ENCODE measurements at regions of chr6 and their contacts with region 1.

Region 1: GRCh38 chr6:593139-593906 is 63.6 kb downstream of the HUS1B start:
- DNase-seq: peak; percentile 31 to 76 (median 66)
- ATAC-seq: peak; percentile 61
- H3K4me3 ChIP-seq: no peak overlapping the region
- H3K4me3 Mint-ChIP-seq: no peak overlapping the region
- H3K27ac ChIP-seq: no peak overlapping the region
- H3K27ac Mint-ChIP-seq: peak overlapping the region; percentile 6
- H3K4me1 ChIP-seq: no peaks in the 10 kb centered on the region
- H3K4me1 Mint-ChIP-seq: no peaks in the 10 kb centered on the region
- H3K27me3 ChIP-seq: no peaks in the 10 kb centered on the region
- H3K27me3 Mint-ChIP-seq: no peaks in the 10 kb centered on the region
- CTCF ChIP-seq: peak; percentile 78

Region 2: GRCh38 chr6:291697-292505 is 301.4 kb before region 1 on chr6 and contains the start of gene DUSP22:
- CTCF ChIA-PET with region 1: interaction called, 4 read pairs
- POLR2A ChIA-PET with region 1: no interaction called
- intact Hi-C with region 1: loop called in 1 of 2 experiments (anchors 2 kb)
- DNase-seq: peak; percentile 50 to 95 (median 81)
- ATAC-seq: peak; percentile 55
- H3K4me3 ChIP-seq: peak within 1 kb of the TSS; percentile 64 to 65
- H3K4me3 Mint-ChIP-seq: peak within 1 kb of the TSS; percentile 95
- H3K27ac ChIP-seq: peak within 1 kb of the TSS; percentile 55 to 85
- H3K27ac Mint-ChIP-seq: peak within 1 kb of the TSS; percentile 98
- H3K4me1 ChIP-seq: peaks cover 26% of the 10 kb centered on the region
- H3K4me1 Mint-ChIP-seq: peaks cover 51% of the 10 kb centered on the region
- H3K27me3 ChIP-seq: no peaks in the 10 kb centered on the region
- H3K27me3 Mint-ChIP-seq: no peaks in the 10 kb centered on the region
- CTCF ChIP-seq: no peak
- total RNA-seq, gene DUSP22: 19.9 to 22.1 TPM

Region 3: DNA sequence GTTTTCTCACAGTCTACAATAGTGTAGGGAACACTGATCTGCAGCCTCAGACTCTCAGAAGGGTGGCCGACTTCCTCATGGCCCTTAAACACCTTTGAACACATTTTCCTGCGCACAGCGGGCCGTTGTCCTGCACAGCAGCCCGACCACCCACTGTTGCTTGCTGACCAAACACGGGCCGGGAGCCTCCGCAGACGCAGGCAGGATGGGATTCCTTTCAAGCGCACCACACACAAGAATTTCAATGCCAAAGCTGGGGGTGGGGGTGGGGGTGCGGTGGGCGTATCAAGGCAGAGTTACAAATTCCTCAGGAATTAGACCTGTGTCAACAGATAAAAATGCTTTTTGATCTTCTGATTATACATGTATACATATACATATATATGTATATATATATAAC is 11.0 kb before region 1 on chr6:
- CTCF ChIA-PET with region 1: interaction called, 13 read pairs
- POLR2A ChIA-PET with region 1: no interaction called
- intact Hi-C with region 1: no loop called
- DNase-seq: no peak
- ATAC-seq: no peak
- H3K4me3 ChIP-seq: no peak overlapping the region
- H3K4me3 Mint-ChIP-seq: no peak overlapping the region
- H3K27ac ChIP-seq: no peak overlapping the region
- H3K27ac Mint-ChIP-seq: no peak overlapping the region
- H3K4me1 ChIP-seq: peaks cover 3% of the 10 kb centered on the region
- H3K4me1 Mint-ChIP-seq: peaks cover 25% of the 10 kb centered on the region
- H3K27me3 ChIP-seq: no peaks in the 10 kb centered on the region
- H3K27me3 Mint-ChIP-seq: no peaks in the 10 kb centered on the region
- CTCF ChIP-seq: no peak

Region 4: GRCh38 chr6:722077-722524 is 128.8 kb after region 1 on chr6:
- CTCF ChIA-PET with region 1: interaction called, 13 read pairs
- POLR2A ChIA-PET with region 1: no interaction called
- intact Hi-C with region 1: loop called (anchors 1 to 5 kb)
- DNase-seq: peak; percentile 36 to 79 (median 71)
- ATAC-seq: peak; percentile 81
- H3K4me3 ChIP-seq: no peak overlapping the region
- H3K4me3 Mint-ChIP-seq: peak overlapping the region; percentile 16
- H3K27ac ChIP-seq: no peak overlapping the region
- H3K27ac Mint-ChIP-seq: no peak overlapping the region
- H3K4me1 ChIP-seq: no peaks in the 10 kb centered on the region
- H3K4me1 Mint-ChIP-seq: peaks cover 3% of the 10 kb centered on the region
- H3K27me3 ChIP-seq: no peaks in the 10 kb centered on the region
- H3K27me3 Mint-ChIP-seq: peaks cover 6% of the 10 kb centered on the region
- CTCF ChIP-seq: peak; percentile 86

Region 5: DNA sequence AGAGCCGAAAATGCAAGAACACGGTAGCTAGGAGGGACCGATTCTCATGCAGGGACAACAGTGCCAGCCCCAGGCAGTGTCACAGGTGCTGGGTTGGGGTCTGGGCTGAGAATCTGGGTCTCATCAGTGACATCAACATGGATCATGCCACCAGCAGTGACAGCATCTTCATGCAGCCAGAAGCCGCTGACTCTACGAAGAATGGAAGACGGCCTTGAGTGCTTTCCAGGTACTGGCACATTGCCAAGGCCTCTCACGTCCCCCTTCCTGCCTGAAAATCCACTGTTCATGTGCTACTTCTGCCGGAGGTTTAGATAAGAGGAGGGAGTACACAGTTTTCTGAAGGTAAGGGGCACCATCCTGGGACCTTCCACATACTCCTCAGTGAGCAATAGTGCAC is 577.5 kb after region 1 on chr6:
- CTCF ChIA-PET with region 1: no interaction called
- POLR2A ChIA-PET with region 1: no interaction called
- intact Hi-C with region 1: no loop called
- DNase-seq: no peak
- ATAC-seq: no peak
- H3K4me3 ChIP-seq: no peak overlapping the region
- H3K4me3 Mint-ChIP-seq: no peak overlapping the region
- H3K27ac ChIP-seq: no peak overlapping the region
- H3K27ac Mint-ChIP-seq: no peak overlapping the region
- H3K4me1 ChIP-seq: no peaks in the 10 kb centered on the region
- H3K4me1 Mint-ChIP-seq: no peaks in the 10 kb centered on the region
- H3K27me3 ChIP-seq: no peaks in the 10 kb centered on the region
- H3K27me3 Mint-ChIP-seq: peaks cover 5% of the 10 kb centered on the region
- CTCF ChIP-seq: no peak

Region 6: DNA sequence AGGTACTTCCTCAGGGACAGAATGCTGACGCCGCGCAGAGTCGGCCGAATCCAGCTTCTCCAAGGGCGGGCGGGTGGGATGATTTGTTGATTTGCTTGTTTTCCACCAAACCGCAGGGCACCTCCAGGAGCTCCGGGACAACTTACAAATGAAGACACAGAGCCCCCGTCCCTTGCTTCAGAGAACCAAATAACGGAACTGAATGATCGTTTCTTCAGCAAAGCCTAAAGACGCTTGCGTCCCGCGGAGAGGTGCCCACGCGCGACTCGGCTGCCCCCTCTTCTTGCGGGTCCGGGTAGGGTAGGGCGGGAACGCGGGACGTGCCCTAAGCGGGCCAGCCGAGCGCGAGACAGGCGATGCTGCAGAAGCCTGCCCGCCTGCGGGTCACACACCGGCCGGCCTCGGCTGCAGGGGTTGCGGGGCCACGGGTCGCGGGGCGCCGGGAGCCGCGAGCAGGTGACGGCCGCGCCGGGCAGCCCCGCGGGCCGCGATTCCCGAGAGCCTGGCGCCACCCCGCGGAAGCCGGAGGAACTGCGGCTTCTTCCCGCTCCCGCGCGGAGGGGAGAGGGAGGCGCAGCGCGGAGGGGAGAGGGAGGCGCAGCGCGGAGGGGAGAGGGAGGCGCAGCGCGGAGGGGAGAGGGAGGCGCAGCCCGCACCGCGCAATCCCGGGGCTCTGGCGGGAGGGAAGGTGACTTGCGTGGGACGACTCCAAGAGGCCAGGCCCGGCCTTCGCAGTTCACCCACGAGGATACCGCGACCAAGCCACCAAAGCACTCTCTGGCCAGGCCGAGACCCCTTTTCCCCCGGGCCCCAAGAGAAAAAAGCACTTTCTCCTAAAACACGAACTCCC is 788.4 kb after region 1 on chr6:
- CTCF ChIA-PET with region 1: interaction called, 16 read pairs
- POLR2A ChIA-PET with region 1: no interaction called
- intact Hi-C with region 1: loop called in 1 of 2 experiments (anchors 5 kb)
- DNase-seq: peak in 7 of 9 experiments; percentile 25 to 70 (median 51)
- ATAC-seq: peak; percentile 62
- H3K4me3 ChIP-seq: peak overlapping the region in 1 of 2 experiments; percentile 33
- H3K4me3 Mint-ChIP-seq: peak overlapping the region; percentile 1
- H3K27ac ChIP-seq: no peak overlapping the region
- H3K27ac Mint-ChIP-seq: no peak overlapping the region
- H3K4me1 ChIP-seq: peaks cover 29% of the 10 kb centered on the region
- H3K4me1 Mint-ChIP-seq: peaks cover 32% of the 10 kb centered on the region
- H3K27me3 ChIP-seq: peaks cover 34 to 46% of the 10 kb centered on the region in 2 experiments
- H3K27me3 Mint-ChIP-seq: peaks cover 61% of the 10 kb centered on the region
- CTCF ChIP-seq: peak; percentile 65

Region 7: GRCh38 chr6:1436334-1437306 is 843.3 kb after region 1 on chr6:
- CTCF ChIA-PET with region 1: interaction called, 22 read pairs
- POLR2A ChIA-PET with region 1: no interaction called
- intact Hi-C with region 1: loop called (anchors 1 kb)
- DNase-seq: peak in 6 of 9 experiments; percentile 6 to 67 (median 41)
- ATAC-seq: peak; percentile 71
- H3K4me3 ChIP-seq: no peak overlapping the region
- H3K4me3 Mint-ChIP-seq: no peak overlapping the region
- H3K27ac ChIP-seq: no peak overlapping the region
- H3K27ac Mint-ChIP-seq: no peak overlapping the region
- H3K4me1 ChIP-seq: no peaks in the 10 kb centered on the region
- H3K4me1 Mint-ChIP-seq: no peaks in the 10 kb centered on the region
- H3K27me3 ChIP-seq: peaks cover 0 to 4% of the 10 kb centered on the region in 2 experiments
- H3K27me3 Mint-ChIP-seq: peaks cover 33% of the 10 kb centered on the region
- CTCF ChIP-seq: peak; percentile 70